ENCODE measurements at regions of chr2 and their contacts with region 1.

Region 1: DNA sequence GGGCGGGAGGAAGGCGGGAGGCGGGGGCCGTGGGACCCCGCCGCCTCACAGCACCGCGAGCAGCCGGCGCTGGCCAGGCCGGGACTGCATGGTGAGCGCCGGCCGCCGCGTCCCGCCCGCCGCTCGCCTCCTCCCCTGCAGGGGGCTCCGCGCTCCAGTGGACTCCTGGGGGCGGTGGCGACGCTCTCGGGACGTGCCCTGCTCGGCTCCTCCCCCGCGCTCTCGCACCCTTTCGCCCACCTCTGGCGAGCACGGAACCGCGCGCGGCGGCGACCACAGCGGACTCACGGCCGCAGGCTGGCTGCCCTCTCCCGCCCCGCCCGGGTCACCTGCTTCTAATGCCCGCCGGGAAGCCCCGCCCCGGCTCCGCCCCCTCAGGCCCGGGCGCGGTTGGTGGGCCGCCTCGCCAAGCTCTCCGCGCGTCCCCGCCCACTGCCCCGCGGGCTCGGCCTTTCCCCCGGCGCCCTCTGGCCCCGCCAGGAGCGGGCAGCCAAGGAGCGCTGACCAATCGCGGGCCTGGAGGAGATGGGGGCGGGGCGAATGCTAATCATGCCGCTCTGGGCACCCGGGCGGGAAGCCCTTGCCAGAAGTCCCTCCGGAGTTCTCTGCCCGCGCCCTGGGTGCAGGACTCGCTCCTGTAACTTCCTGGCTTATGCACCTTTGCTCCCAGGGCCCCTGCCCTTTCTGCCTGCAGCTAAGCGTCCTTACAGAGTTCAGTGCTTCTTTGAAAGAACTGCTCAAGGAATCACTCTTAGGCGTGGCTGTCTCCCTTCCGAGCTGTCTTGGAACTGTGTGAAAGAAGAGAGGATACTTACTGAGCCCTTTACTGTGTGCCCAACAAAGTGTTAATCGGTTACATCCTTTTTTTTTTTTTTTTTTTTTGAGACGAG is at the start of gene FZD5:
- DNase-seq: peak; percentile 99
- ATAC-seq: peak; percentile 95
- total RNA-seq, gene FZD5: 4.8 TPM

Region 2: DNA sequence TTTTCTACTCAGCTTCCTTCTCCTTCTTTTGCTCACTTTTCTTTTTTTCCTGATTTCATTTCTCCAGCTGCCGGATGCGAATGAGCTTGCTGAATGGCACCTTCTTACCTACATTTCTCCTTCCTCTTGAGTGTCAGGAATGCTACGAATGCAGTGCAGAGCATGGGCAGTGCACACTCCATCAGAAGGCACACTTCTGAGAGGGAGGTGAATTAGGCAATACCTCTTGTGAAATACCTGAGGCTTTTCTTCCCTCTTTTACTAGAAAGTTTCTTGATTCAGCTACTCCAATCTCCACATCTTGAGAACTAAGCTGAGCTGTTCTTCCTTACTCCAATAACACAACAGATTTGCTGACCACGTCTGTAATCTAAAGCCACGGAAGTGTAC is 204.4 kb after region 1 on chr2:
- intact Hi-C with region 1: loop called (anchors 10 kb)
- DNase-seq: no peak
- ATAC-seq: no peak

Measured in left ventricle myocardium superior (tissue), 1 donor.